A673 (cell line): ENCODE measurements at regions of chr1 and their contacts with region 1.

Region 1: GRCh38 chr1:99707535-99708142 is 58.8 kb downstream of the FRRS1 start:
- DNase-seq: peak; percentile 73
- H3K4me3 ChIP-seq: no peak overlapping the region
- H3K27ac ChIP-seq: no peak overlapping the region
- H3K4me1 ChIP-seq: no peaks in the 10 kb centered on the region
- H3K27me3 ChIP-seq: no peaks in the 10 kb centered on the region
- CTCF ChIP-seq: peak; percentile 92

Region 2: DNA sequence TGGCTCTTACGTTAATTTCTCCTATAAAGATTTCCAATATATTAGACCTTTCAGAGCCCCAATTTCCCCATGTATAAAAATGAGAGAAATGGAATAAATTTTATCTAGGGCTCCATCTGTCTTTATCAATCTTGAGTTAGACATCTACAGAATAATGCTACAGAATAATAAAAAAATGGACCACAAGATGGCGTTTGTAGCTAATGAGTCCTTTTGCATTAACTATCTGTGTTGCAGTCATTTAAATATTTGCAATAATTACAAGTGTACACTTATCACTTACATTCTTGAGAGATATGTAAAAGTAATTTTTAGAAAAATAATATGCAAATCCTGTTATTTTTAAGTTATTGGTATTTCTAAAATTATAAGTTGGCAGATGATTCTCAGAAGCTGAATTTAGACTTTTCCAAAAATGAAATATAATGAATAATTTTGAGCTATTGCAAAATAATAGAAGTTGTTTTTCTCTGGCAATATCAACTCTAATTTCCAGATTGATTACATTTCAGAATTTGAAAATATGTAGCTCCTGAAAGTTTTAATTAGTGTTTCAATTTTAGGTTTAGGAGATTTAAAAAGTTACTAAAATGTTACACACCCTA is 958.4 kb before region 1 on chr1:
- CTCF ChIA-PET with region 1: no interaction called
- POLR2A ChIA-PET with region 1: no interaction called
- intact Hi-C with region 1: loop called (anchors 10 kb)
- DNase-seq: peak; percentile 39
- H3K4me3 ChIP-seq: no peak overlapping the region
- H3K27ac ChIP-seq: no peak overlapping the region
- H3K4me1 ChIP-seq: no peaks in the 10 kb centered on the region
- H3K27me3 ChIP-seq: no peaks in the 10 kb centered on the region
- CTCF ChIP-seq: peak; percentile 64

Region 3: DNA sequence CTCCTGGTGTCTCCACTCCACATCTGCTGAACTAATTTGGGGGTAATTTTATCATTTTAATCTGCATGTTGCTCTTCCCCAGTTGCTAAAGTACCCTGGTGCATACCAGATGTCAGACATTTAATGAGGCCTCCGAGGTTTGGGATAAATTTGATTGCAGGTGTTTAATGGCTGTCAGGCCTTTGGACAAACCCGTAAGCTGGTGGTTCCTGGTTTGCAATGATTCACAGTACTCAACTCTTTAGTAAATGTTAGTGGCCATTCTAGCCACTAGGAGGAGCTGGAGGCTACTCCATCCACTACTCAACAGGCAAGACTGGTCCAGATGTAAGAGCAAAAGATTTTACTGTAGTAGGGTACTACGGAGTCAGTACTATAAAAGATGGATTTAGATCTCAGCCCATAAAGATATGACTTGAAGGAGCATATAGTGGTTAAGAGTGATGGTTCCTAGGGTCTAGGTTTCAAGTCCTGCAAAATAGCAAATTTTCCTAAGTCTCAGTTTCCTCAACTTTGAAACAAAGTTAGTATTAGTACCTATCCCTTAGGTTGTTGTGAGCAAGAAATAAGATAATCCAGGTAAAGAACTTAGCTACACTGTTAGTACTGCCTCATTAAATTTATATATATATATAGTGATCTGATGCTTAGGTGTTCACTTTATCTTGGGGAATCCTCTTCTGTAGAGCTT is 913.3 kb before region 1 on chr1:
- CTCF ChIA-PET with region 1: no interaction called
- POLR2A ChIA-PET with region 1: no interaction called
- intact Hi-C with region 1: loop called (anchors 10 kb)
- DNase-seq: peak; percentile 73
- H3K4me3 ChIP-seq: no peak overlapping the region
- H3K27ac ChIP-seq: no peak overlapping the region
- H3K4me1 ChIP-seq: no peaks in the 10 kb centered on the region
- H3K27me3 ChIP-seq: no peaks in the 10 kb centered on the region
- CTCF ChIP-seq: peak; percentile 79

Region 4: DNA sequence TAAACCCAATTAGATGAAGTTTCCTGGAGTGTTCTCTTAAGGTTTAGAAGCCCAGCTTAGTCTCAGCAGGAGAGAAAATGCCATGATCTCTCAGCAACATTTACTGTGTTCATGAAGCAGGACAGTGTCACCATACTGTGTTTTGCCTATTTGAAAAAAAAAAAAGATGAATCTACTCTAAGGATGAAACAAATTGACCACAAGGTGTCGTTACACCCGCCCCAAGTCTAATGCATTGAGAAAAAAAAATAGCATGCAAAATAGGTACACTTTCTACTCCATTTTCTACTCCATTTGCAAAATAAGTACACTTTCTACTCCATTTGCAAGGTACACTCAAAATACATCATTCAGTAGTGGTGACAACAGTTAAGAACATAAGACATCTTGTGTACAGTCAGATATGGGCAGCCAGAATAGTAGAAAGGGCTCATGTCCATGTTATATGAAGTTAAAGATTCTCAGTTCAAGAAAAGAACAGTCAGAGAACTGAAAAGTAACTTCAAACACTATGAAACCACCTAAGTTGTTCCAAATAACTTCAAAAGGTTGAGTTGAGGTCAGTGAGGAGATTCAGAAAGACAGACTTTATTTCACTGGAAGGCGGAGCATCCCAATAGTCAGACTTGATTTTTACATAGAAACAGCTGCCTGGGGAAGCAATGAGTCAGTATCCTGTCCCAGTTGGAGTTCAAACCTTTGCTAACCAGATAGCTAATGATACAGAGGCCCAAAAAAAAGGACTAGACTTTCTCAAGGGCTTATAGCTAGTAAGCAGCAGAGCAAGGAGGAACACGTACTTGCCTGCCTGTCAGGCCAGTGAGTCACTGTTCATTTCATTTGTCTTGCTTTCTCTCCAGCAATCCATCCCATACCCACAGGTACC is 716.3 kb before region 1 on chr1:
- CTCF ChIA-PET with region 1: interaction called, 4 read pairs
- POLR2A ChIA-PET with region 1: no interaction called
- intact Hi-C with region 1: loop called (anchors 10 kb)
- DNase-seq: peak; percentile 67
- H3K4me3 ChIP-seq: no peak overlapping the region
- H3K27ac ChIP-seq: no peak overlapping the region
- H3K4me1 ChIP-seq: no peaks in the 10 kb centered on the region
- H3K27me3 ChIP-seq: no peaks in the 10 kb centered on the region
- CTCF ChIP-seq: peak; percentile 67

Region 5: GRCh38 chr1:99180343-99180808 is 527.3 kb before region 1 on chr1:
- CTCF ChIA-PET with region 1: interaction called, 5 read pairs
- POLR2A ChIA-PET with region 1: no interaction called
- intact Hi-C with region 1: loop called (anchors 1 kb)
- DNase-seq: peak; percentile 87
- H3K4me3 ChIP-seq: no peak overlapping the region
- H3K27ac ChIP-seq: no peak overlapping the region
- H3K4me1 ChIP-seq: no peaks in the 10 kb centered on the region
- H3K27me3 ChIP-seq: no peaks in the 10 kb centered on the region
- CTCF ChIP-seq: peak; percentile 88

Region 6: GRCh38 chr1:99496067-99496466 is 211.6 kb before region 1 on chr1:
- CTCF ChIA-PET with region 1: no interaction called
- POLR2A ChIA-PET with region 1: no interaction called
- intact Hi-C with region 1: loop called (anchors 10 kb)
- DNase-seq: no peak
- H3K4me3 ChIP-seq: no peak overlapping the region
- H3K27ac ChIP-seq: no peak overlapping the region
- H3K4me1 ChIP-seq: no peaks in the 10 kb centered on the region
- H3K27me3 ChIP-seq: no peaks in the 10 kb centered on the region
- CTCF ChIP-seq: no peak

Region 7: DNA sequence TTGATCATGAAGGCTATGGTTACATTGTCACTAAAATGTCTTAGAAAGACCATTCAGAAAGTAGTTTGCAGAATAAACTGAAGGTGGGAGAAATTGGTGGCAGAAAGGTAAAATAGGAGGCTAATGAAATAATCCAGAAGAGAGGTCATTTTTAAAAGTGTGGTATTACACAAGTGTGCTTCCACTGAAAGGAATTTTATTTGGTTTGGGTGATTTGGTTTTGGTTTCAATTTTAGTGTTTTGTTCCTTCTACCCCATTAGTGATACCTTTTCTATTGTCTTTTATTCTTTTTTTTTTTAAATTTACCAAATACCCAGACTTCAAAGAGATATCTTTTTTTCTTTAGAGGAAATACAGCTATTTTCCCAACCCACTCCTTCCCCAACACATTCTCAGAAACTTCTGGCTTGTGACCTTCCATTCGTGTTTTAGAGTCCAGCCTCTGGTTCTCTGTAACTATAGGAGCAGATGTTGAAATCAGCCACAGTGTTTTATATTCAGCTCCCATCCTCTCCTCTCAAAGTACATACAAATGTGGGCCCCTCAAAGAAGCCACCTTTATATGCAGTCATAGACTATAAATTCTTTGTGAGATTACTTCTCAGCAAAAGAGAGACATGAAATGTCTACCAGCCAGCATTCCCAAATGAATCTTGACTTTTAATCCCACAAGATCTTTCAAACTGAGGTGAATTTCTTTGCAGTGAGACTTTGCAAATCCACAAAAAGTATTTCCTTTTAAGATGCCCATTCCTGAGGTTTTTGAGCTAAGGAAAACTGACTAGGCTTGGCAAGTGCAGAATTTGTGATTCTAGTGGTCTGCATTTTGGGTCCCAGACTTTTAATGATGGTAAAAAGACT is 103.7 kb before region 1 on chr1:
- CTCF ChIA-PET with region 1: no interaction called
- POLR2A ChIA-PET with region 1: no interaction called
- intact Hi-C with region 1: no loop called
- DNase-seq: no peak
- H3K4me3 ChIP-seq: no peak overlapping the region
- H3K27ac ChIP-seq: no peak overlapping the region
- H3K4me1 ChIP-seq: no peaks in the 10 kb centered on the region
- H3K27me3 ChIP-seq: no peaks in the 10 kb centered on the region
- CTCF ChIP-seq: no peak